ENCODE measurements at regions of chrX and their contacts with region 1.

Region 1: DNA sequence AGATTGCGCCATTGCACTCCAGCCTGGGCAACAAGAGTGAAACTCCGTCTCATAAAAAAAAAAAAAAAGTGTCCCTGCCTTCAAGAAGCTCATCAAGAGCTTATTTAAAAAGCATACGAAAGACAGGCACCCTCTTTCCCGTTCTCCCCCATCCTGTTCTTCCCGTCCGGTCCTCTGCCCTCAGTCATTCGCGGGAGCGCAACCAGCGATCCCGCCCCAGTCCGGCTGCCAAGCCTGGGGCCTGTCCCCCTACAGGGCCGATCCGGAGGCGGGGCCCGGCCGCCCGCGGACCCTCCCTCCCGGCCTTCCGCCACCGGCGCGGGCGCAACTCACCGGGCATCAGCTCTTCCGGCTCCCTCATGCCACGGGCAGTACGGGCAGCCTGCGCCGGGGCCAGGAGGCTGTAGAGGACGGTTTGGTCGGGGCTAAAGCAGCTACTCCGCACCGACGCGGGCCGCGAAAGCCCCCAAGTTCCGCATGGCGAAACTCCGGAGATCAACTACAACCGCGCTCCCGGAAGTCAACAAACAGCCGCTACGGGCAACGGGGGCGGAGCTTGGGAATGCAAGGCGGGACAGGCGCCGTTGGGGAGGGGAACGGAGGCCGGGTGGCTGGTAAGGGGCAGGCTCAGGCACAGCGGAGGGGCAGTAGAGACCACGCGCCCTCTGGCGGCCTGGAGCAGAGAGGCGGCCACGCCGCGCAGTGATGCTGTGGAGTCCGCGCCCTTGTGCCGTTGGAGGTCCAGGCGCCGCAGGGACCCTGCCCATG is at the start of gene RPGR:
- DNase-seq: peak; percentile 93
- H3K4me3 ChIP-seq: peak within 1 kb of the TSS; percentile 79
- H3K4me3 Mint-ChIP-seq: peak within 1 kb of the TSS; percentile 89
- H3K27ac Mint-ChIP-seq: peak within 1 kb of the TSS; percentile 97
- H3K4me1 ChIP-seq: no peaks in the 10 kb centered on the region
- H3K4me1 Mint-ChIP-seq: no peaks in the 10 kb centered on the region
- H3K27me3 ChIP-seq: no peaks in the 10 kb centered on the region
- H3K27me3 Mint-ChIP-seq: no peaks in the 10 kb centered on the region
- CTCF ChIP-seq: peak; percentile 67 to 86
- total RNA-seq, gene RPGR: 8.0 and 8.5 TPM in 2 replicates

Region 2: GRCh38 chrX:38086451-38087215 is 240.6 kb before region 1 on chrX:
- CTCF ChIA-PET with region 1: no interaction called
- POLR2A ChIA-PET with region 1: no interaction called
- intact Hi-C with region 1: no loop called
- DNase-seq: no peak
- H3K4me3 ChIP-seq: no peak overlapping the region
- H3K4me3 Mint-ChIP-seq: no peak overlapping the region
- H3K27ac Mint-ChIP-seq: no peak overlapping the region
- H3K4me1 ChIP-seq: no peaks in the 10 kb centered on the region
- H3K4me1 Mint-ChIP-seq: no peaks in the 10 kb centered on the region
- H3K27me3 ChIP-seq: no peaks in the 10 kb centered on the region
- H3K27me3 Mint-ChIP-seq: no peaks in the 10 kb centered on the region
- CTCF ChIP-seq: no peak

Region 3: GRCh38 chrX:38192007-38192810 is 135.0 kb before region 1 on chrX:
- CTCF ChIA-PET with region 1: interaction called, 6 read pairs
- POLR2A ChIA-PET with region 1: no interaction called
- intact Hi-C with region 1: loop called (anchors 1 kb)
- DNase-seq: no peak
- H3K4me3 ChIP-seq: no peak overlapping the region
- H3K4me3 Mint-ChIP-seq: no peak overlapping the region
- H3K27ac Mint-ChIP-seq: no peak overlapping the region
- H3K4me1 ChIP-seq: no peaks in the 10 kb centered on the region
- H3K4me1 Mint-ChIP-seq: no peaks in the 10 kb centered on the region
- H3K27me3 ChIP-seq: no peaks in the 10 kb centered on the region
- H3K27me3 Mint-ChIP-seq: no peaks in the 10 kb centered on the region
- CTCF ChIP-seq: peak; percentile 38 to 48

Region 4: DNA sequence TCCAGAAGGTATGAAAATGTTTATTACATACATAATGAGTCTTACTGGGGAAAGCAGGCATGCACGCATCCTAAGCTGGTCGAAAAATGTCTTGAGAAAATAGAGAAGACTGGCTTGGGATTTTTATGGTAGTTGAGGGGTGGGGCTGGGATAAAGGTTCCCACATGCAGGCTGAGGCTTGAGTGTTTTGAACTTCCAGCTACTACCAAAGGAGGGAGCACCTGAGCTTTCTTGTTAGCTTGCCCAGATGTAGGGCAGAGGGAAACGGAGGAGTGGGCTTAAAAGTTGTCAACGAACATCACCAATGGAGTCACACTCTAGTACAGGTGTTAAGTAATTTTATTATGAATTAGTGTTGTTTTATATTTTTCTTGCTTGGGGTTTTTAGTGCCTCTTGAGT is 67.0 kb before region 1 on chrX:
- CTCF ChIA-PET with region 1: interaction called, 13 read pairs
- POLR2A ChIA-PET with region 1: no interaction called
- intact Hi-C with region 1: loop called (anchors 1 kb)
- DNase-seq: peak; percentile 49 to 57
- H3K4me3 ChIP-seq: no peak overlapping the region
- H3K4me3 Mint-ChIP-seq: no peak overlapping the region
- H3K27ac Mint-ChIP-seq: no peak overlapping the region
- H3K4me1 ChIP-seq: no peaks in the 10 kb centered on the region
- H3K4me1 Mint-ChIP-seq: peaks cover 6% of the 10 kb centered on the region
- H3K27me3 ChIP-seq: no peaks in the 10 kb centered on the region
- H3K27me3 Mint-ChIP-seq: peaks cover 3% of the 10 kb centered on the region
- CTCF ChIP-seq: peak; percentile 43 to 55

Region 5: GRCh38 chrX:38304010-38304409 is 23.2 kb before region 1 on chrX:
- CTCF ChIA-PET with region 1: interaction called, 9 read pairs
- POLR2A ChIA-PET with region 1: no interaction called
- intact Hi-C with region 1: loop called (anchors 1 kb)
- DNase-seq: peak in 1 of 2 experiments; percentile 6
- H3K4me3 ChIP-seq: no peak overlapping the region
- H3K4me3 Mint-ChIP-seq: no peak overlapping the region
- H3K27ac Mint-ChIP-seq: no peak overlapping the region
- H3K4me1 ChIP-seq: no peaks in the 10 kb centered on the region
- H3K4me1 Mint-ChIP-seq: no peaks in the 10 kb centered on the region
- H3K27me3 ChIP-seq: no peaks in the 10 kb centered on the region
- H3K27me3 Mint-ChIP-seq: no peaks in the 10 kb centered on the region
- CTCF ChIP-seq: peak; percentile 36

Region 6: GRCh38 chrX:38342853-38343778 is 15.9 kb after region 1 on chrX:
- CTCF ChIA-PET with region 1: interaction called, 4 read pairs
- POLR2A ChIA-PET with region 1: interaction called, 11 read pairs
- intact Hi-C with region 1: no loop called
- DNase-seq: peak; percentile 69 to 77
- H3K4me3 ChIP-seq: no peak overlapping the region
- H3K4me3 Mint-ChIP-seq: peak overlapping the region; percentile 31
- H3K27ac Mint-ChIP-seq: no peak overlapping the region
- H3K4me1 ChIP-seq: peaks cover 23% of the 10 kb centered on the region
- H3K4me1 Mint-ChIP-seq: no peaks in the 10 kb centered on the region
- H3K27me3 ChIP-seq: no peaks in the 10 kb centered on the region
- H3K27me3 Mint-ChIP-seq: no peaks in the 10 kb centered on the region
- CTCF ChIP-seq: no peak

Region 7: DNA sequence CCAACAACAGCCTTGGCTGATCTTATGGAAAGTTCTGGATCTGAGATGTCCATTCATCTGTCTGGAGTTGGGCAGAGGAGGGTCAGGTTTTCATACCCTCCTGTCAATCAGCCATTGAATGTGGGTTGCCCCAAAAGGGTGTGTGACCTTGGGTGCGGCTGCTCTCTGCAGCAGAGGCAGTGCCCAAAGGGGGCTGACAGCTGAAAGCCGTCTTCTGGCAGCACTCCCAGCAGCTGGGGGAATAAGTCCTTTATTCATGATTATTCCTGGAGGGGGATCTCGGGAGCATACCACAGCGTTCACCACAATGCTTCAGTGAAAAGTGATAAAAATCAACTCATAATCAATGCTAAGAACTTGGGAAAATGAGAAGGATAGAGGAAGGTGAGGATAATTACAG is 79.9 kb after region 1 on chrX:
- CTCF ChIA-PET with region 1: no interaction called
- POLR2A ChIA-PET with region 1: no interaction called
- intact Hi-C with region 1: no loop called
- DNase-seq: no peak
- H3K4me3 ChIP-seq: no peak overlapping the region
- H3K4me3 Mint-ChIP-seq: no peak overlapping the region
- H3K27ac Mint-ChIP-seq: no peak overlapping the region
- H3K4me1 ChIP-seq: no peaks in the 10 kb centered on the region
- H3K4me1 Mint-ChIP-seq: no peaks in the 10 kb centered on the region
- H3K27me3 ChIP-seq: no peaks in the 10 kb centered on the region
- H3K27me3 Mint-ChIP-seq: peaks cover 5% of the 10 kb centered on the region
- CTCF ChIP-seq: no peak